MCF 10A (cell line): ENCODE measurements at regions of chr5 and their contacts with region 1.

Region 1: GRCh38 chr5:102223542-102224477 is 72.3 kb downstream of the SLCO4C1 start:
- DNase-seq: peak; percentile 51
- H3K4me3 Mint-ChIP-seq: no peak overlapping the region
- H3K27ac Mint-ChIP-seq: no peak overlapping the region
- H3K4me1 Mint-ChIP-seq: no peaks in the 10 kb centered on the region
- H3K27me3 Mint-ChIP-seq: peaks cover 22% of the 10 kb centered on the region
- CTCF ChIP-seq: peak; percentile 53

Region 2: GRCh38 chr5:100430268-100431195 is 1793.3 kb before region 1 on chr5:
- CTCF ChIA-PET with region 1: interaction called, 3 read pairs
- POLR2A ChIA-PET with region 1: no interaction called
- intact Hi-C with region 1: loop called (anchors 5 kb)
- DNase-seq: peak; percentile 65
- H3K4me3 Mint-ChIP-seq: no peak overlapping the region
- H3K27ac Mint-ChIP-seq: no peak overlapping the region
- H3K4me1 Mint-ChIP-seq: no peaks in the 10 kb centered on the region
- H3K27me3 Mint-ChIP-seq: no peaks in the 10 kb centered on the region
- CTCF ChIP-seq: peak; percentile 82

Region 3: DNA sequence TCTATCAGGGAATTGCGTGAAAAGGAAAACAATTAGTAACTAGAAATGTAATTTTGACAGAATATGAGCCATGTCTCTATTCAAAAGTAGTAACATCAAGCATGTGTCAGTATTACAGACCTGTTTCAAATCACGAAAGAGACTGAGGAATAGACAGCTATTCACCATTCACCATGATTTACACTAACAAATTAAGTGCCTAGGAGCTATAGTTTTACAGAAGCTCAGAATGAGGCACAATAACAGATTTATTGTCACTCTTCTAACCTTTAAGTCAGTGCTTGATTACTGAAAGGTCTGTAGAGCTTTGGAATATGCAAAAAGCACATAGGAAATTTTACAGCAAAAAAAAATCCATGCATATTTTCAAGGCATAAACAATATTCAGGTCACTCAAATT is 135.9 kb before region 1 on chr5:
- CTCF ChIA-PET with region 1: no interaction called
- POLR2A ChIA-PET with region 1: no interaction called
- intact Hi-C with region 1: no loop called
- DNase-seq: no peak
- H3K4me3 Mint-ChIP-seq: no peak overlapping the region
- H3K27ac Mint-ChIP-seq: no peak overlapping the region
- H3K4me1 Mint-ChIP-seq: peaks cover 5% of the 10 kb centered on the region
- H3K27me3 Mint-ChIP-seq: no peaks in the 10 kb centered on the region
- CTCF ChIP-seq: no peak

Region 4: DNA sequence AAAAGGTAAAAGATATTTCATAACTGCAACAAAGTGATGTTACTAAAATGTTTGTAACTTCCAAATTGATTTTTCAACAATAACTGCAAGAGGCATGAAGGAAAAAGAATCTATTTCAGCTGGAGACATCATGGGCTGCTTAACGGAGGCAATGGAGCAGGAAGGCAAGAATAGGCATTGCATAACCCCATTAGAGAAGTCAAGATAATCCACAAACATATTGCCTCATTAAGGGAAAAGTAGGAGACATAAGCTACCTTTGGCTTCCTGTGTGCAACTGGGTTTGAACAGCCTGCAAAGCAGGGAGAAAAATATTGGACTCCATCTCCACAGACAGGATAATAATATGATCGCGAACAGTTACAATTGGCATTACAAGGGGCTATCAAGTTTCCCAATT is 25.6 kb after region 1 on chr5:
- CTCF ChIA-PET with region 1: no interaction called
- POLR2A ChIA-PET with region 1: no interaction called
- intact Hi-C with region 1: no loop called
- DNase-seq: no peak
- H3K4me3 Mint-ChIP-seq: no peak overlapping the region
- H3K27ac Mint-ChIP-seq: no peak overlapping the region
- H3K4me1 Mint-ChIP-seq: no peaks in the 10 kb centered on the region
- H3K27me3 Mint-ChIP-seq: peaks cover 35% of the 10 kb centered on the region
- CTCF ChIP-seq: no peak

Region 5: DNA sequence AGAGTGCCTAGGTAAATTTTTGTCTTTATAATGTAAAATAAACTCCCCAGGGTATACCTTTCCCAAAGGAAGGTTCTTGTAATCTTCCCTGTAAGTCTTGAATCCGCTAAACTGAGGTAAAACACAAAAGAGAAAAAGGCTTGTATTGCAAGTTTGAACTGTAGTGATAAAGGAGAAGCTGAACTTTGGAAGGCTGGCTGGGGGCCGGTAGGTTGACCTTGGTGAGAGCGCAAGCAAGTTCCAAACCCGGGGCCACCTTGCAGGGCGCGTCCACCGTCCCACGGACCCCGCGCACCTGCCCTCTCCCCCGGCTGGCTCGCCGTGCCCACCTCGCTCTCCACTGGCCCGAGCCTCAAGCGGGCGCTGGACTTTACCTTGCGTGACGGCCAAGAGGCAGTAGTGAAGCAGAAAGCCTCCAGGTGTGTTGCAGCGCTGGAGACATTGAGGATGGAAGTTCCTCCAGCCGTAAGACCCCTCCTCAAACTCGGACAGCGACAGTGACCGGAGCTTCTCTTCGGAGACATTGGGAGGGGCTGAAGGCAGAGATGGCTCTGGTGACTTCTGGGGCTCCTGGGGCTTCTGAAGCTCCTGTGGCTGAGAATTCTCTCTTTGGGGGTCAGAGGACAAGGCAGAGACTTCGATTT is 71.8 kb after region 1 on chr5:
- CTCF ChIA-PET with region 1: no interaction called
- POLR2A ChIA-PET with region 1: no interaction called
- intact Hi-C with region 1: no loop called
- DNase-seq: no peak
- H3K4me3 Mint-ChIP-seq: no peak overlapping the region
- H3K27ac Mint-ChIP-seq: no peak overlapping the region
- H3K4me1 Mint-ChIP-seq: peaks cover 6% of the 10 kb centered on the region
- H3K27me3 Mint-ChIP-seq: no peaks in the 10 kb centered on the region
- CTCF ChIP-seq: no peak